AG04450 (cell line): ENCODE measurements at regions of chr16 and their contacts with region 1.

Region 1: GRCh38 chr16:22321339-22322001 is 24.3 kb downstream of the POLR3E start:
- DNase-seq: peak; percentile 47
- H3K4me3 ChIP-seq: no peak overlapping the region
- H3K27ac ChIP-seq: no peak overlapping the region
- H3K27me3 ChIP-seq: no peaks in the 10 kb centered on the region
- CTCF ChIP-seq: peak; percentile 92

Region 2: GRCh38 chr16:22300427-22301071 is 20.9 kb before region 1 on chr16:
- CTCF ChIA-PET with region 1: interaction called, 16 read pairs
- POLR2A ChIA-PET with region 1: no interaction called
- DNase-seq: peak; percentile 30
- H3K4me3 ChIP-seq: no peak overlapping the region
- H3K27ac ChIP-seq: no peak overlapping the region
- H3K27me3 ChIP-seq: no peaks in the 10 kb centered on the region
- CTCF ChIP-seq: peak; percentile 78

Region 3: DNA sequence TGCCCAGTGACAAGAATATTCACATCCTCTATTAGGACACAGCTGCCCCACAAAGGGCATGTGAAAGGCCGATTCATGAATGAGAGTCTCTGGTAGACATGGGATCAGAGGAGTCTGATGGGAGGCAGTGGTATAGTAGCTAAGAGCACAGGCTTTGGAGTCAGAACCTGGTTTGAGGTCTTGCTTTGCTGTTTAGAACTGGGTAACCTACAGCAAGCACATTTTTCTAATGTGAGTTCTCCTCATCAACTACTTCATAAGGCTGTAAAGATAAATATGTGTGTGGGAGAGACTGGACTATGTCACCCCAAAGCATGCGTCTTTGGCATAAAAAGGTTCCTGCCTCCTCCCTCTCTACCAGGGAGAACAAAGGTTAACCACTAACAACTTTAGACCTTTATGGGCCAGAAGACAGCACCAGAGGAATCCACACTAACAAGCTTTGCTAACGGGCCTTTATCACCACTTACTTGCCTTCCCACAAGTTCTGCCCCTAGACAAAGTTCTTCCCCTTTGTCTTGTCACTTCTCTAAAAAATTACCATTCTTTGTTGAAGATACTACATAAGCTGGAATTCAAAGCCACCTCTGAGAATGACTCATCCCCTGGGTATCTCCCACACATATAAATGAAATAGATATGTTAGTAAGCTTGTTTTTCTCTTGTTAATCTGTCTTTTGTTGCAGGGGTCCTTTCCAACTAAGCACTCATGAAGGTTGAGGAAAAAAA is 31.9 kb after region 1 on chr16:
- CTCF ChIA-PET with region 1: interaction called, 10 read pairs
- POLR2A ChIA-PET with region 1: interaction called, 3 read pairs
- DNase-seq: peak; percentile 71
- H3K4me3 ChIP-seq: no peak overlapping the region
- H3K27ac ChIP-seq: peak overlapping the region; percentile 95
- H3K27me3 ChIP-seq: no peaks in the 10 kb centered on the region
- CTCF ChIP-seq: no peak